ENCODE measurements at regions of chr20 and their contacts with region 1.

Region 1: GRCh38 chr20:48657475-48658470 is 170.0 kb downstream of the PREX1 start:
- DNase-seq: peak; percentile 83
- H3K4me3 Mint-ChIP-seq: no peak overlapping the region
- H3K27ac Mint-ChIP-seq: no peak overlapping the region
- H3K4me1 Mint-ChIP-seq: peaks cover 11% of the 10 kb centered on the region
- H3K27me3 Mint-ChIP-seq: peaks cover 59% of the 10 kb centered on the region
- CTCF ChIP-seq: peak; percentile 98

Region 2: GRCh38 chr20:48597405-48598302 is 60.1 kb before region 1 on chr20:
- CTCF ChIA-PET with region 1: no interaction called
- intact Hi-C with region 1: no loop called
- DNase-seq: no peak
- H3K4me3 Mint-ChIP-seq: no peak overlapping the region
- H3K27ac Mint-ChIP-seq: no peak overlapping the region
- H3K4me1 Mint-ChIP-seq: peaks cover 26% of the 10 kb centered on the region
- H3K27me3 Mint-ChIP-seq: peaks cover 38% of the 10 kb centered on the region
- CTCF ChIP-seq: no peak

Region 3: GRCh38 chr20:48682529-48683251 is 24.9 kb after region 1 on chr20:
- CTCF ChIA-PET with region 1: interaction called, 15 read pairs
- intact Hi-C with region 1: no loop called
- DNase-seq: peak; percentile 84
- H3K4me3 Mint-ChIP-seq: no peak overlapping the region
- H3K27ac Mint-ChIP-seq: no peak overlapping the region
- H3K4me1 Mint-ChIP-seq: peaks cover 7% of the 10 kb centered on the region
- H3K27me3 Mint-ChIP-seq: peaks cover 29% of the 10 kb centered on the region
- CTCF ChIP-seq: no peak

Region 4: DNA sequence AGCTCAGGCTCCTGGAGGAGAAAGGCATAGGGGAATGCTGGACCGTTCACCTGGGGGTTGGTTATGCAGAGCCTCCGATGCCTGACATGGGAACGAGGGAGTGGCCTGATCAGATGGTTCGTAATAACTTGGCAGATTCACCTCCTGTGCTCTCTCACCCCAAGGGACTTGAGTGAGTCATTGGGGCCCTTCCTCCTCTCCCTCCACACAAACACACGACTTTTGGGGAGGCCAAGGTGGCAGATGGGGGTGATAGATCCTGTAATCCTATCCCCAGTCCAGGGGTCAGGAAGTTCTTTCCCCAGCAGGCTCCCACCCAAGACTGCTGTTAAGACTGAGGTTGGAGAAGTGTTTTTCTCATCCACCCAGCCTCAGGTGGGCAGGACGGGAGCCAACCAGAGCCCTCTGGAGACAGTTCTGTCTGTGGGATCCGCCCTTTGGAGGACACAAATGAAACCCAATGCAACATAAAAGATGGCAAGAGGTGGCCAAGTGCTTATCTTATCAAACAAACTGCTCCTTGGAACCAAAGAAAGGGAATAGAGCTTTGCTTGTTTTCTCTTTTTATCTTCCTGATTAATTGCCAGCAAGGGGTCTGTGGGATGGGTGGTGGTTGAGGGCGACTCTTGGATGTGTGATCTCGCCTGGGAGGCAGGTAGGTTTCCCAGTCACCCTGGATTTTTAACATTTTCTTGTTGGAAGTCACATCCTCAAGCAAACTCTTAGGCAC is 218.3 kb after region 1 on chr20:
- CTCF ChIA-PET with region 1: interaction called, 27 read pairs
- intact Hi-C with region 1: no loop called
- DNase-seq: no peak
- H3K4me3 Mint-ChIP-seq: no peak overlapping the region
- H3K27ac Mint-ChIP-seq: no peak overlapping the region
- H3K4me1 Mint-ChIP-seq: peaks cover 25% of the 10 kb centered on the region
- H3K27me3 Mint-ChIP-seq: peaks cover 17% of the 10 kb centered on the region
- CTCF ChIP-seq: no peak

Region 5: DNA sequence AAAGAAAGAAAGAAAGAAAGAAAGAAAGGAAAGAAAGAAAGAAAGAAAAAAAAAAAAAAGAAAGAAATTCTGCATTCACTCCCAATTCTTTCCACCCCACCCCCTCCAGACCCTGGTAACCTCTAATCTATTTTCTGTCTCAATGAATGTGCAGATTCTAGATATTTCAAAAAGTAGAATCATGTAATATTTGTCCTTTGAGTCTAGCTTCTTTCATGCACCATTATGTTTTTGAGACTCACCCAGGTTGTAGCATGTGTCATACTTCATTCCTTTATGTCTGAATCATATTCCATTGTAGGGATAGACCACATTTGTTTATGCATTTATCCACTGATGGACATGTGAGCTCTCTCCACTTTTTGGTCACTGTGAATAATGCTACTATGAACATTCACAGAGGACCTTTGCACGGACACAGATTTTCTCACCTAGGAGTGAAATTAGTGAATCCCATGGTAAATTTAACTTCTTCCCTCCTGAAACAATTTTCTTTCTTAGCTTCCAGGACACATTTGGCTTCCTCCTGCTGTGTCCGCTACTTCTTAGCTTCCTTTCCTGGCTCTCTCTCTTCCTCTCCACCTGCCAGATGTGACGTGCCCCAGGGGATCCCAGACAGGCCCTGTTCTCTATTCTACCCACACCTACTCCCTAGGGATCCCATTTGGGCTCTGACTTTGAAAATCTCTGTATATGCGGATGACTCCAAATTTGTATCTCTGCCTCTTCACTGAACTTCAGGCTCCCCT is 239.6 kb after region 1 on chr20:
- CTCF ChIA-PET with region 1: interaction called, 26 read pairs
- intact Hi-C with region 1: no loop called
- DNase-seq: no peak
- H3K4me3 Mint-ChIP-seq: no peak overlapping the region
- H3K27ac Mint-ChIP-seq: no peak overlapping the region
- H3K4me1 Mint-ChIP-seq: peaks cover 19% of the 10 kb centered on the region
- H3K27me3 Mint-ChIP-seq: peaks cover 56% of the 10 kb centered on the region
- CTCF ChIP-seq: no peak

Region 6: DNA sequence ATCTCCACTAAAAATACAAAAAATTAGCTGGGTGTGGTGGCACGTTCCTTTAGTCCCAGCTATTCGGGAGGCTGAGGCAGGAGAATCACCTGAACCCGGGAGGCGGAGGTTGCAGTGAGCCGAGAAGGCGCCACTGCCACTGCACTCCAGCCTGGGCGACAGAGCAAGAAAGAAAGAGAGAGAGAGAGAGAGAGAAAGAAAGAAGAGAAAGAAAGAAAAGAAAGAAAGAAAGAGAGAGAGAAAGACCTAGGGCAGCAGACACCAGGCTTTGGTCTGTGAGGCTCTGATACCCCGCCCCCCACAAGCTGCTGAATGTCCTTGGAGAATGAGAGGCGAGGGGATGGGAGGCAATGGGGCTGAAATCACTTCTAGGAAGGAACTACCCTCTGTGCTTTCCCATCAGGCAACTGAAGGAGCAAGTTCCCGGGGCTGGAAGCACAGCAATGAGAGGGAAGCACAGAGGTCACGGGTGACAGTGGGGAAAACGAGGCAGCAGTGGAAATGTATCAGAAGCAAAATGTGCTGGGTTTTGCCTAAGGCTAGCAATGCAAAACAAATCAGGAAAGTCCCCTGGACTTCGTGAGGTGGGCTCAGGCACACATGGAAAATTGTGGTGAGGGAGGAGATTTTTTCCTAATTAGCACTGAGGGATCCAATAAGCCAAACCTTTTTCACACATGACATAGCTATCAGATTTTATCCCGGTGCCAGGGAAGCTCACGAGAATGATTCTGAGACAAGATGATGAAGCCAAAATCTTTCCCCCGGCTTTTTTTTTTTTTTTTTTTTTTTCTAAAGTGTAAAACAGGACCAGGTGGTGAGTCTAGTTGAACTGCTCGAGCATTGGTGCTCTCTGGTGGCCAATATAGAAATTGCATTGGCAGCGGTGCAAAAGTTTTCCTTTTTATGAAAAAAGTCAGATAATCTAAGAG is 246.9 kb after region 1 on chr20:
- CTCF ChIA-PET with region 1: interaction called, 120 read pairs
- intact Hi-C with region 1: loop called (anchors 1 kb)
- DNase-seq: peak; percentile 75
- H3K4me3 Mint-ChIP-seq: no peak overlapping the region
- H3K27ac Mint-ChIP-seq: no peak overlapping the region
- H3K4me1 Mint-ChIP-seq: peaks cover 33% of the 10 kb centered on the region
- H3K27me3 Mint-ChIP-seq: peaks cover 85% of the 10 kb centered on the region
- CTCF ChIP-seq: peak; percentile 87

Region 7: DNA sequence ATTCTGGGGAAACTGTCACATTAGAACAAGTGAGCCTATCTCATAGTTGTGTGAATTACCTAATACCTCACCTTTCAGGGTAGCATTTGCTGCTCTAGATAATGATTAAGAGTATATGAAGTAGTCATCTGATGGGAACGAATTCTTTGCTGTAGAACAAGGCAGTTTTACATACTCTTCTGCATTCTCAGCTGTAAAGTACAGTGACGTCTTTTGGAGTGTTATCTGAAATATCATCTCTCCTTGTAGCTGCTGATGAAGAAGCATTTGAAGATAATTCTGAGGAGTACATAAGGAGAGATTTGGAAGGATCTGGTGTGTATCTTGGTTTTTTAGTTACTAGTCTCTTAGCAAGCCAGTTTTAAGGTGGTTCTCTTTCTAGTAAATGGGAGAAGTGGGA is 416.8 kb after region 1 on chr20:
- CTCF ChIA-PET with region 1: no interaction called
- intact Hi-C with region 1: no loop called
- DNase-seq: no peak
- H3K4me3 Mint-ChIP-seq: no peak overlapping the region
- H3K27ac Mint-ChIP-seq: no peak overlapping the region
- H3K4me1 Mint-ChIP-seq: no peaks in the 10 kb centered on the region
- H3K27me3 Mint-ChIP-seq: no peaks in the 10 kb centered on the region
- CTCF ChIP-seq: no peak